Heart left ventricle (tissue), 16 donors: ENCODE measurements at regions of chr1 and their contacts with region 1.

Region 1: DNA sequence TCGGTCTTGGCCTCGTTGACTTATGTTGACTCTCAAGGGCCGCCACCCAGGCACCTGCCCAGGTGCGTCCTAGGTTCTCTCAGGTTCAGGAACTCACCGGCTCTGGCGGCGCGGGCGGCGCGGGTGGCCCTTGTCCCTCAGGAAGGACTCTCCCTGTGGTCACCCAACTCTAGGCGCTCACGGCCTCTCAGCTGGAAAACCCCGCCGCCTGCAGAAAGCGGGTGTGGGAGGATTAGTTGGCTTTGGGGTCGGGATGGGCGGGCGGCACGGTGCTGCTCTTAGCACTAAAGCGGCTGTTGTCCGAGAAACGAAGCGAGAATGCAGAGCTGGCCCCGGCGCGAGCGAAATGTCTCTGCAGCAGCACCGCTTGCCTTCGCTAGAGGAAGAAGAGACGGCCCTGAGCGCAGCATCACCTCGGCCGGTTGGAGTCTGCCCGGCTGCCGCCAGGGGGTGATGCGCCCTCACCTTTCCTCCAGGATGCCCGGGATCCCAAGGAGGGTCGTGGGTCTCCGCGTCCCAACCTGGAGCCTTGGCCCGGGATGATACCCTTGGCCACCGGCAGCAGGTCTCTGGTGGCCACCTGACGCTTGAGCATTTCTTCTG is 8.1 kb upstream of the TADA1 start:
- DNase-seq: peak; percentile 29 to 73 (median 41)
- ATAC-seq: peak; percentile 69 to 92 (median 90)
- H3K4me3 ChIP-seq: peak overlapping the region in 2 of 12 donors; percentile 7 to 14
- H3K27ac ChIP-seq: no peak overlapping the region
- H3K4me1 ChIP-seq: peaks cover 0 to 7% (median 0%) of the 10 kb centered on the region in 12 donors
- H3K27me3 ChIP-seq: peaks cover 5 to 29% (median 13%) of the 10 kb centered on the region in 9 donors
- CTCF ChIP-seq: peak; percentile 36 to 75 (median 63)
- POLR2A ChIP-seq: no peak

Region 2: GRCh38 chr1:166627558-166627957 is 256.6 kb before region 1 on chr1:
- intact Hi-C with region 1: no loop called
- DNase-seq: no peak
- ATAC-seq: no peak
- H3K4me3 ChIP-seq: no peak overlapping the region
- H3K27ac ChIP-seq: no peak overlapping the region
- H3K4me1 ChIP-seq: no peaks in the 10 kb centered on the region
- H3K27me3 ChIP-seq: no peaks in the 10 kb centered on the region
- CTCF ChIP-seq: no peak
- POLR2A ChIP-seq: no peak

Region 3: DNA sequence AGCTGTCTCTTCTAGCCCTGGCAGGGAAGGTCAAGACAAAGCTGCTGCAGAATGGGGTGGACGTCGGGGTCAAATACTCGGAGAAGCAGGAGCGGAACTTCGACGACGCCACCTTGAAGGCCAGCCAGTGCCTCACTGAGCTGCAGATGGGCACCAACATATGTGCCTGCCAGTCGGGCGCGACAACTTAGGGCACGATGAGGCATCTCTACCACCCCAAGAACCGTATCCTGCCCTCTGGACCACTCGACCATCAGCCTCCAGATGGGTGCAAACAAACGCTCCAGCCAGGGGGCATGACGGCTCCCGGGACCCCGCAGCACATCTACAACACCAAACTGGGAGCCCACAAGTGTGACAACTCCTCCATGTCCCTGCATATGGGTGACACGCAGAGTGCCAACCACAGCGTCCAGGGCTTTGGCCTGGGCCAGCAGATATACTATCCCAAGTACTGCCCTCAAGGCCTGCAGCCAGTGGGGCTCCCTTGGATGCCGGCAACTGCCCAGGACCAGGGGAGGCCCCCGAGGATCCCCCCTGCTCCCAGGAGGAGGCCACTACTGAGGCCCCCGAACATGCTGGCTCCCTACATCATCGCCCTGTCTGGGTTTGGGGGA is 87.4 kb before region 1 on chr1:
- intact Hi-C with region 1: no loop called
- DNase-seq: peak in 1 of 5 donors; percentile 22
- ATAC-seq: no peak
- H3K4me3 ChIP-seq: no peak overlapping the region
- H3K27ac ChIP-seq: no peak overlapping the region
- H3K4me1 ChIP-seq: no peaks in the 10 kb centered on the region
- H3K27me3 ChIP-seq: peaks cover 0 to 3% (median 0%) of the 10 kb centered on the region in 9 donors
- CTCF ChIP-seq: no peak
- POLR2A ChIP-seq: no peak

Region 4: GRCh38 chr1:166852925-166853324 is 31.2 kb before region 1 on chr1:
- intact Hi-C with region 1: no loop called
- DNase-seq: no peak
- ATAC-seq: no peak
- H3K4me3 ChIP-seq: no peak overlapping the region
- H3K27ac ChIP-seq: no peak overlapping the region
- H3K4me1 ChIP-seq: peaks cover 0 to 18% (median 3%) of the 10 kb centered on the region in 12 donors
- H3K27me3 ChIP-seq: no peaks in the 10 kb centered on the region
- CTCF ChIP-seq: no peak
- POLR2A ChIP-seq: no peak

Region 5: GRCh38 chr1:166910396-166910994 is 26.4 kb after region 1 on chr1:
- intact Hi-C with region 1: loop called in 1 of 10 experiments (anchors 2 kb)
- DNase-seq: peak in 4 of 5 donors; percentile 51 to 58 (median 56)
- ATAC-seq: peak; percentile 84 to 94 (median 92)
- H3K4me3 ChIP-seq: no peak overlapping the region
- H3K27ac ChIP-seq: no peak overlapping the region
- H3K4me1 ChIP-seq: no peaks in the 10 kb centered on the region
- H3K27me3 ChIP-seq: no peaks in the 10 kb centered on the region
- CTCF ChIP-seq: peak; percentile 39 to 82 (median 68)
- POLR2A ChIP-seq: no peak